HCT116 (cell line): ENCODE measurements at regions of chr7 and their contacts with region 1.

Region 1: DNA sequence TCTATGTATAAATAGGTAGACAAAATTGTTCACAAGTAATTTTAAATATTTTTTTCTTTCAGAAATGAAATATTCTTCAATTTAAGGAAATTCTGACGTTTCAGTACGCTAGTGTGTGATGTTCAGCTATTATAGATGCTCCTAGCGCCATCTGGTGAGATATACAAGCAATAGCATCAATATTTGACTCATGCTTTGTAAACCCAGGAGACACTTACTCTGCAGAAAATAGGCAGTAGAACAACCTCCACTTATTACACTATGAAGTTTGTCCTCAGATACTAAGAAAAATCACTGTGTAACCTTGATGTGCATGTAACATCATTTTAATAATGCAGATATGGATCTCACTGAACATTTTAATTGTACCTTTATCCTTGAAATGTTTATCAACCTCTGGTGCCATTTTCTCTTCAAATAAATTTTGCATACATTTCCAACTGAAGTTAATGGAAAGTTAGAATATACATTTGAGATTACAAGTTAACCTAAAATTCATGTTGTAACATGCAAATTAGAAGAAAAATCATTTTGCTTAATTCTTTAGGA is 151.5 kb upstream of the FAM3C start:
- DNase-seq: peak; percentile 63
- ATAC-seq: peak; percentile 37; the same call in 1 of the 2 replicates
- H3K4me3 ChIP-seq: no peak overlapping the region
- H3K27ac ChIP-seq: no peak overlapping the region; the same call in 1 of the 2 replicates
- H3K4me1 ChIP-seq: peaks cover 32 to 56% of the 10 kb centered on the region in 2 experiments
- H3K27me3 ChIP-seq: no peaks in the 10 kb centered on the region
- CTCF ChIP-seq: peak; percentile 60 to 81 (median 73)
- POLR2A ChIP-seq: no peak
- RAD21 ChIP-seq: peak; percentile 97

Region 2: DNA sequence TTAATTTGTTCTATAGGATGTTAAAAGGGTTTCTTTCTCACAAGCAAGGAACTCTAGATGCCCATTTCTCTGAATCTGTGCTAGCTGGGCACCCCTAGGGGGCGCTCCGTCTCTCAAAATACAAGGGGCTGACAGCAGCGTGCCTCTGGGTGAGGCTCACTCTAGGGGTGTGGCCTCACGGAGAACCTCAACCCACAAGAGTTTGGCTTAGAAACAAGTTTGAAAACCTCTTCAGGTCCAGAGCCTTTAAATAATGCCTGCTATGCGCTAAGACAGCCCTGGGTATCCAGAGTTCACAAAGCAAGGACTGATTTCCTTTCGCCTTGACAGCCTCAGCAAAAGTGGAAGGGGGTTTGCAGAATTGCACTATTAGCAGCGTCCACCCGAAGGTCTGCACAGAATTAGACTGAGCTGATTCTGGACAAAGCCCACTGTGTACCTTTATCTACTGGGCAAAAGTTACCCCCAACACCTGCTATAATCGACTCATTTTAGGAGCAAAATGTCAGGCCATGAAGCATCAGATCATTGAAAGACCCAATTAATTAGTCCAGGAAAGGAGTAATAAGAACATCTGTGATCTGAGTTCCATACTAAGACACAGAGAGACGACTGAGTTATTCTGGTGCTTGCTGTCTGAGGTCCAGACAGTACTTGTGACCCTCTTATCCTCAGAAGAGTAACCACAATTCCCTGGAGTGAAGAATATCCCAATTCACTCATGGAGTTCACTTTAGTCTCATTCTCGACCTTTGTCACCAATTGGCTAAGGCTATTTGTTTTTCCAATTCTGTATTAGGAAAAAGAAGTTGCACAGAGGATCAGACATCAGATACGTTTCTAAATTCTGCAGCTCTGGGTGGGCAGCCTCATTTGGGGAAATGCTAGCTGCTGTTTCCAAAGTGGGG is 559.7 kb before region 1 on chr7:
- CTCF ChIA-PET with region 1: no interaction called
- POLR2A ChIA-PET with region 1: no interaction called
- RAD21 ChIA-PET with region 1: no interaction called
- intact Hi-C with region 1: loop called (anchors 10 kb)
- DNase-seq: peak; percentile 81
- ATAC-seq: peak; percentile 92
- H3K4me3 ChIP-seq: peak overlapping the region; percentile 45 to 60
- H3K27ac ChIP-seq: no peak overlapping the region
- H3K4me1 ChIP-seq: peaks cover 0 to 15% of the 10 kb centered on the region in 2 experiments; a peak in 1 of 4 replicates
- H3K27me3 ChIP-seq: no peaks in the 10 kb centered on the region
- CTCF ChIP-seq: peak; percentile 87 to 98 (median 98)
- POLR2A ChIP-seq: no peak
- RAD21 ChIP-seq: peak; percentile 90

Region 3: GRCh38 chr7:121126801-121127534 is 420.6 kb before region 1 on chr7:
- CTCF ChIA-PET with region 1: no interaction called
- POLR2A ChIA-PET with region 1: no interaction called
- RAD21 ChIA-PET with region 1: no interaction called
- intact Hi-C with region 1: loop called (anchors 1 kb)
- DNase-seq: peak; percentile 51
- ATAC-seq: no peak
- H3K4me3 ChIP-seq: no peak overlapping the region
- H3K27ac ChIP-seq: no peak overlapping the region; the same call in 1 of the 2 replicates
- H3K4me1 ChIP-seq: peaks cover 4 to 28% of the 10 kb centered on the region in 2 experiments; a peak in 3 of 4 replicates
- H3K27me3 ChIP-seq: no peaks in the 10 kb centered on the region
- CTCF ChIP-seq: peak; percentile 16 to 88 (median 47); a peak in 5 of 6 replicates
- POLR2A ChIP-seq: no peak
- RAD21 ChIP-seq: peak; percentile 88

Region 4: GRCh38 chr7:121140790-121141189 is 406.8 kb before region 1 on chr7:
- CTCF ChIA-PET with region 1: no interaction called
- POLR2A ChIA-PET with region 1: no interaction called
- RAD21 ChIA-PET with region 1: no interaction called
- intact Hi-C with region 1: no loop called
- DNase-seq: no peak
- ATAC-seq: no peak
- H3K4me3 ChIP-seq: no peak overlapping the region
- H3K27ac ChIP-seq: no peak overlapping the region
- H3K4me1 ChIP-seq: no peaks in the 10 kb centered on the region
- H3K27me3 ChIP-seq: no peaks in the 10 kb centered on the region
- CTCF ChIP-seq: no peak
- POLR2A ChIP-seq: no peak
- RAD21 ChIP-seq: no peak

Region 5: DNA sequence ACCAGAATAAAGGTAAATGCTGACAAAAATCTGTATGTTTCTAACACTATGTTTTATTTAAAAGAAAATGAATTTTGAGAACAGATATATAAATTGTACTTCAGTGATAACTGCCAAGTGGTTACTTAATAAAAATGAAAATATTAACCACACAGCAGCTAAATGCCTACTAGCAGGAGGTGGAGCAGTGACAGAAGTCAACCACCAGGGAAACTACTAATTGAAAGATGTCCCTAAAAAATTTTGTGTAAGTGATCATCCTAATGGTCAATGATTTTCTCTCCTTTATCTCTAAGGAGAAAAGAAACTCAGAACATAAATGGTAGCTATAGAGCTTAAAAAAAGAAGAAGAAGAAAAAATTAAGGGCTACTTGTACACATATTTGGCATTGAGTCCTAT is 195.9 kb before region 1 on chr7:
- CTCF ChIA-PET with region 1: interaction called, 3 read pairs
- POLR2A ChIA-PET with region 1: no interaction called
- RAD21 ChIA-PET with region 1: no interaction called
- intact Hi-C with region 1: loop called (anchors 5 kb)
- DNase-seq: no peak
- ATAC-seq: 0 out of 2 replicates have a peak, but pooled peaks have one; percentile 30
- H3K4me3 ChIP-seq: no peak overlapping the region
- H3K27ac ChIP-seq: 0 out of 2 replicates have a peak overlapping the region, but pooled peaks have one; percentile 0
- H3K4me1 ChIP-seq: peaks cover 0 to 19% of the 10 kb centered on the region in 2 experiments; a peak in 2 of 4 replicates
- H3K27me3 ChIP-seq: no peaks in the 10 kb centered on the region
- CTCF ChIP-seq: peak in 2 of 3 experiments; percentile 32 to 43; a peak in 3 of 6 replicates
- POLR2A ChIP-seq: no peak
- RAD21 ChIP-seq: no peak

Region 6: GRCh38 chr7:121366852-121367431 is 180.7 kb before region 1 on chr7:
- CTCF ChIA-PET with region 1: interaction called, 42 read pairs
- POLR2A ChIA-PET with region 1: no interaction called
- RAD21 ChIA-PET with region 1: interaction called, 5 read pairs
- intact Hi-C with region 1: loop called (anchors 1 kb)
- DNase-seq: no peak
- ATAC-seq: 0 out of 2 replicates have a peak, but pooled peaks have one; percentile 45
- H3K4me3 ChIP-seq: no peak overlapping the region
- H3K27ac ChIP-seq: peak overlapping the region; percentile 30; the same call in 1 of the 2 replicates
- H3K4me1 ChIP-seq: peaks cover 34 to 50% of the 10 kb centered on the region in 2 experiments
- H3K27me3 ChIP-seq: no peaks in the 10 kb centered on the region
- CTCF ChIP-seq: peak; percentile 57 to 71 (median 64); a peak in 5 of 6 replicates
- POLR2A ChIP-seq: no peak
- RAD21 ChIP-seq: peak; percentile 69

Region 7: DNA sequence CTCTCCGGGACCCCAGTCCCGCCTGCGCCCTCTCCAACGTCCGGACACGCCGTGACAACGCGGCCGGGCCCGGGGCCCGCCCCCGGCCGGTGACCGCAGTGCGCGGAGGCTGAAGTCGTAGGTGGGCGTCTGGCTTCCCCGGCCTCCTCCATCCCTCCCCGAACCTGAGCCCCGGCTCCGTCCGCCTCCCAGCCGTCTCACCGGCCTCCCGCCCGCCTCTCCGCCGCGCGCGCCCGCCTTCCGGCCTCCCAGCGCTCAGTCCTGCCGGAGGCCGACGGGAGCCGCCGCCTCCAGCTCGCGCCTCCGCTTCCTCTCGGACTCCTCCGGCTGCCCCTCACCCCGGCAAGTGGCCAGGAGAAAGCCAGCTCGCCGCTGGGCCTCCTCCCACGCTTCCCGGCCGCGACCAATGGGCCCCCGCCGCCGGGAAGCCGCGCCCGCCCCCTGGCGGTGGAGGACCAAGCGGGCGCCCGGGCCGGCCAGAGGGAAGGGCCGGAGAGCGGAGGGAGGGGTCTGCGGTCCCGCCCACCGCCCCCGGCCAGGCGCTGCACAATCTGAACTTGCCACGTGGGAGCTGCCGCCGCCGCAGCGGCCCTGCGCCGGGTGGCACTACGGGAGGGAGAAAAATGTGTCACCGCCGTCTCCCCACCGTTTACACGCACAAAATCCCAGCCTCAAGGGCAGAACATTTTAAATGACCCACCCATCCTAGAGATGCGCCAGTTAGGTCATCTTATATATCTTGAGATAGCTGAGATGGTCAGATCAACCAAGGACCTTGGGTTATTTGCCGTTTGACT is 151.5 kb before region 1 on chr7 and contains the start of gene FAM3C:
- CTCF ChIA-PET with region 1: interaction called, 6 read pairs
- POLR2A ChIA-PET with region 1: interaction called, 7 read pairs
- RAD21 ChIA-PET with region 1: interaction called in 1 of 2 experiments, 4 read pairs
- intact Hi-C with region 1: loop called (anchors 1 kb)
- DNase-seq: peak; percentile 82
- ATAC-seq: peak; percentile 87
- H3K4me3 ChIP-seq: peak within 1 kb of the TSS; percentile 65 to 74
- H3K27ac ChIP-seq: peak within 1 kb of the TSS; percentile 95
- H3K4me1 ChIP-seq: peaks cover 40 to 77% of the 10 kb centered on the region in 2 experiments
- H3K27me3 ChIP-seq: no peaks in the 10 kb centered on the region
- CTCF ChIP-seq: peak; percentile 42 to 93 (median 71); a peak in 5 of 6 replicates
- POLR2A ChIP-seq: peak; percentile 72
- RAD21 ChIP-seq: peak; percentile 43
- total RNA-seq, gene FAM3C: 322 TPM

Region 8: DNA sequence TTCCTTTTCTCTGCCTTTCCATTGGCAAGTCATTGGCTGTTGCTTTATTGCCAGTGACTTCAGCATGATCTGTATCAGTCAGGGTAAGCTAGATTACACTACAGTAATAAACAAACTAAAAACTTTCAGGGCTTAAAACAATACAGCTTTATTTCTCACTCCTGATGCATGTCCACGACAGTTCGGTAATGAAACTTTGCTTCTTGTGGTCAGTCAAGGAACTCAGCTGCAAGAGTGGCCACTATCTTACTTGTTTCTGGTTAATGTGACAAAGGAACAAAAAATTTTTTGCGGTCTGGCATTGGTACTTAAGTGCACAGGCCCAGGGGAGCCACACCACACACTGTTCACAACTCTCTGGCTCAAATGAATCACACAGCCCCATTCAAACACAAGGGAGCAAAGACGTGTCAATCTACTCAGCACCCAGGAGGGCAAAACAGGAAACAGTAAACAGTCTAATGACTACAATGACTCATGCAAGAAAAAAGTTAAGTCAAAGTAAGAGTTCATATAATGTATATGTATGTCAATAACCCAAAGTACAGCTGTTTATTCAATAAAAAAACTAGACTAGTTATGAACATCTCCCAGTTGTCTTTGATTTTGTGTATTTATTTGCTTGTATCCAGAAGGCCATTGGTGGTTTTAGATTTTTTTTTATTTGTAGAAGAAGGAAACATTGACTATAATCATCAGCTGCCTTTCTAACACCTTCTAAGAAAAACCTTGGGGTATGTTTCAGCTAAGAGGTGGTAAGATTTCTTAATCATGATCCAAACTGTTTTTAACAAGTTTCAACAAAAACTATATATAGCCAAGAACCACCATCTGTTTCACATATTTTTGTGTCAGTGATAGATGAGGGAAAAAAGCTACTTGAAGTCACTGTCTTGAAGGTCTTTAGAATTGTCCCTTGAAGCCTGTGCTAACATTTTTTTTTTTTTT is 17.1 kb before region 1 on chr7:
- CTCF ChIA-PET with region 1: no interaction called
- POLR2A ChIA-PET with region 1: interaction called, 4 read pairs
- RAD21 ChIA-PET with region 1: no interaction called
- intact Hi-C with region 1: loop called (anchors 1 kb)
- DNase-seq: peak; percentile 100
- ATAC-seq: peak; percentile 96
- H3K4me3 ChIP-seq: peak overlapping the region in 1 of 2 experiments; percentile 17; a peak in 2 of 4 replicates
- H3K27ac ChIP-seq: peak overlapping the region; percentile 77
- H3K4me1 ChIP-seq: peaks cover 32 to 48% of the 10 kb centered on the region in 2 experiments
- H3K27me3 ChIP-seq: no peaks in the 10 kb centered on the region
- CTCF ChIP-seq: no peak
- POLR2A ChIP-seq: no peak
- RAD21 ChIP-seq: peak; percentile 54; the same call in 1 of the 2 replicates